H1 (cell line): ENCODE measurements at regions of chr2 and their contacts with region 1.

Region 1: GRCh38 chr2:28594289-28595108 is 98.6 kb downstream of the PLB1 start:
- DNase-seq: peak; percentile 70 to 95
- H3K4me3 ChIP-seq: no peak overlapping the region
- H3K27ac ChIP-seq: no peak overlapping the region
- H3K4me1 ChIP-seq: peaks cover 0 to 10% (median 3%) of the 10 kb centered on the region in 4 experiments; a peak in 5 of 7 replicates
- H3K27me3 ChIP-seq: no peaks in the 10 kb centered on the region
- CTCF ChIP-seq: peak; percentile 80 to 84 (median 83)
- EP300 ChIP-seq: no peak
- POLR2A ChIP-seq: no peak
- RAD21 ChIP-seq: peak; percentile 86 to 88

Region 2: GRCh38 chr2:28556303-28556702 is 38.2 kb before region 1 on chr2:
- CTCF ChIA-PET with region 1: no interaction called
- POLR2A ChIA-PET with region 1: no interaction called
- DNase-seq: no peak
- H3K4me3 ChIP-seq: no peak overlapping the region
- H3K27ac ChIP-seq: no peak overlapping the region
- H3K4me1 ChIP-seq: no peaks in the 10 kb centered on the region
- H3K27me3 ChIP-seq: no peaks in the 10 kb centered on the region
- CTCF ChIP-seq: no peak
- EP300 ChIP-seq: no peak
- POLR2A ChIP-seq: no peak
- RAD21 ChIP-seq: no peak

Region 3: GRCh38 chr2:28566521-28567041 is 27.9 kb before region 1 on chr2:
- CTCF ChIA-PET with region 1: interaction called, 47 read pairs
- POLR2A ChIA-PET with region 1: no interaction called
- DNase-seq: peak; percentile 57 to 97
- H3K4me3 ChIP-seq: peak overlapping the region; percentile 37 to 72 (median 66); a peak in 7 of 8 replicates
- H3K27ac ChIP-seq: no peak overlapping the region
- H3K4me1 ChIP-seq: no peaks in the 10 kb centered on the region; a peak in 1 of 7 replicates
- H3K27me3 ChIP-seq: peaks cover 0 to 5% (median 1%) of the 10 kb centered on the region in 4 experiments; a peak in 1 of 7 replicates
- CTCF ChIP-seq: peak; percentile 90 to 100 (median 92)
- EP300 ChIP-seq: no peak
- POLR2A ChIP-seq: peak in 1 of 2 experiments; percentile 50; a peak in 1 of 3 replicates
- RAD21 ChIP-seq: peak; percentile 82 to 85

Region 4: DNA sequence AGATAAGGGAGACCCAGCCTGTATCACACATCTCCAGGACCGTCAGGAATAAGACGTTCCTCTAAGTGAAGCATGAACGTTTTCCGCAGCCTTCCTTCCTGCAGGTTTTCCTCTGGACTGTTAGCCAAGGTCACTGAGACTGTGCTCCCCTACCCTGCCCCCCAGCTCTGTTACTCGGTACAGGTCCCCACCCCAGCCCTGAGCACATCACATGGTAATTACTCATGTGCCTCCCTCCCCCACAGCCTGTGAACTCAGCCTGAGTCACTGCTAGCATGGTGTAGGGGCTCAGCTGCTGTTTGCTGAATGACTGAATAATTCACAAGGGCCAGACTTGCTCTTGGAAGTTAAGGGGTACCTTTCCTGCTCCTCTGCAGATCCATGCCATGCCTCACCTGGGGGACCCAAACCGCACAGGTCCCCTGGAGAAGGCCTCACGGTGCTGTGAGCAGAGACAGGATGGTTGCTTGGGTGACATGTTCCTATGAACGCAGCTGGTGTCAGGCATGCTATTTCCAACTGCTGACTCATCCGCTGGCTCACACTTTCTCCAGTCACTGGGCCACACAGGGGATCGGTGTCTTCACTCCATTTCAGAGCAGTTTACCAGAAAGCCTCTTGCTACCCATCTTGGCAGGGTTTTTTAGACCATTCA is 10.5 kb before region 1 on chr2:
- CTCF ChIA-PET with region 1: interaction called, 28 read pairs
- POLR2A ChIA-PET with region 1: no interaction called
- DNase-seq: peak in 1 of 2 experiments; percentile 21
- H3K4me3 ChIP-seq: no peak overlapping the region
- H3K27ac ChIP-seq: no peak overlapping the region
- H3K4me1 ChIP-seq: peaks cover 0 to 5% (median 0%) of the 10 kb centered on the region in 4 experiments; a peak in 4 of 7 replicates
- H3K27me3 ChIP-seq: no peaks in the 10 kb centered on the region
- CTCF ChIP-seq: no peak
- EP300 ChIP-seq: no peak
- POLR2A ChIP-seq: no peak
- RAD21 ChIP-seq: no peak

Region 5: DNA sequence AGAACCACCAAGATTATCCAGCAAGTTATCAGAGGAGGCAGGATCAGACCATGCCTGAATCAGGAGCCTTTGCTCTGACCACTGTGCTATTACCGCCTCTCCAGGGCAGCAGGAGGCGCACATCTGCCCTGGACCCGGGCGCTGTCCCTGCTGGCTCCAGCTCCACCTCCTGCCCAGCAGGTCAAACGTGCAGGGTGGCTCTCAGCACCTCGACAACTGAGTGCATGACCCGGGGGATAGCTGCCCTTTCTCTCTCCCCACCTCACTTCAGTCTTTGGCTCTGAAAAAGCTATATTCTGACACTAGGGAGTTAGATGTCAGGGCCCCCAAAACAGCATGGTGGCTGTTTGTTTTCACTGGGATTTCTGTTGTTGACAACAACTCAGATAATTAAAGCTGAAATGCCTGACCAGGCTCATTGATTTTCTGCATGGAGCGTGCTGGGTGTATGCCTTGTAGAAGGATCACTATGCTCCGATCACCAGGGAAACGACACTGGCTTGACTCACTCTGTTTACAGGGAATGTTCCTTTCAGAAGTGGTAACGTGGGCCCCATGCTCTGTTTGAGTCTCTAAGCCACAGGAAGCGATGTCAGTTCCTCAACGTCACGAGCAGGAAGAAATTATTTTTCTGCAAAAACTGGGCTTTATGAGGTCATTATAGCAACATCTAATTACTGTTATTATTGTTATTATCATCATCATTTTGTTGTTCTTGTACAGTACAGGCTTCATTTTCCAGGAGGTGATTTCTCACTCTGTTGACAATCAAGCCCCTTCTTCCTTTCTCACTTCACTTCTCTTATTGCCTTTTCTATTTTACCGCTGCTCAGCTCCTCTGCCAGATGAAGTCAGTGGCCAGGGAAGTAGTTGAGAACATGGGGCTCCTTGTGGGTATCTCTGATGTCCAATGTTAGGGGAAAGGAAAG is 26.9 kb after region 1 on chr2:
- CTCF ChIA-PET with region 1: interaction called, 16 read pairs
- POLR2A ChIA-PET with region 1: interaction called, 3 read pairs
- DNase-seq: peak in 1 of 2 experiments; percentile 56
- H3K4me3 ChIP-seq: no peak overlapping the region
- H3K27ac ChIP-seq: no peak overlapping the region
- H3K4me1 ChIP-seq: peaks cover 2 to 12% (median 9%) of the 10 kb centered on the region in 4 experiments; a peak in 6 of 7 replicates
- H3K27me3 ChIP-seq: no peaks in the 10 kb centered on the region
- CTCF ChIP-seq: peak; percentile 78 to 83 (median 80)
- EP300 ChIP-seq: no peak
- POLR2A ChIP-seq: no peak
- RAD21 ChIP-seq: peak; percentile 69 to 79

Region 6: DNA sequence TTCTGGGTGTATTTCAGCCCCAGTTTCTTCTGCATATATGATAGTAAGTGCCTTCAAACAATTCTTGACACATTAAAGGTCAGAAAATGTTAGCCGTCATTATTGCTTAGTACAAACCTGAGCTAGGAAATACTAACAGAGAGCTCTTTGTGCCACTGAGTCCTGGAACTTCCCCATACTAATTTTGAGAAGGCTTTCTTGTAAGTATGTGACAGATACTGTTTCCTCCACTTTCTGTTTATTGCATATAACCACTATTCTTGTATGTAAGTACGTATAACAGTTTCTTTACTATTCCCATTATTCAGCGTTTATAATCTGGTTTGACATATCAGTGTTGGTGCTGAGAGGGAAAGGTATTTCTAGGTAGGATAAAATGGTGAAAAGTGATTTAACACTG is 166.9 kb after region 1 on chr2:
- CTCF ChIA-PET with region 1: interaction called, 32 read pairs
- POLR2A ChIA-PET with region 1: interaction called, 3 read pairs
- DNase-seq: no peak
- H3K4me3 ChIP-seq: no peak overlapping the region
- H3K27ac ChIP-seq: no peak overlapping the region
- H3K4me1 ChIP-seq: peaks cover 0 to 2% (median 0%) of the 10 kb centered on the region in 4 experiments; a peak in 1 of 7 replicates
- H3K27me3 ChIP-seq: no peaks in the 10 kb centered on the region
- CTCF ChIP-seq: no peak
- EP300 ChIP-seq: no peak
- POLR2A ChIP-seq: no peak
- RAD21 ChIP-seq: no peak

Region 7: GRCh38 chr2:28909655-28910353 is 315.3 kb after region 1 on chr2:
- CTCF ChIA-PET with region 1: no interaction called
- POLR2A ChIA-PET with region 1: no interaction called
- DNase-seq: no peak
- H3K4me3 ChIP-seq: no peak overlapping the region
- H3K27ac ChIP-seq: no peak overlapping the region; the same call in 1 of the 2 replicates
- H3K4me1 ChIP-seq: no peaks in the 10 kb centered on the region
- H3K27me3 ChIP-seq: no peaks in the 10 kb centered on the region
- CTCF ChIP-seq: no peak
- EP300 ChIP-seq: no peak
- POLR2A ChIP-seq: no peak
- RAD21 ChIP-seq: no peak